HEK293T (cell line): ENCODE measurements at regions of chr7 and their contacts with region 1.

Region 1: GRCh38 chr7:55255496-55256435 is 109.4 kb upstream of the LANCL2 start:
- DNase-seq: peak; percentile 81

Region 2: GRCh38 chr7:54773472-54774399 is 482.0 kb before region 1 on chr7:
- CTCF ChIA-PET with region 1: interaction called, 22 read pairs
- POLR2A ChIA-PET with region 1: interaction called, 5 read pairs
- DNase-seq: peak; percentile 76

Region 3: GRCh38 chr7:54788664-54789063 is 467.1 kb before region 1 on chr7:
- CTCF ChIA-PET with region 1: interaction called, 26 read pairs
- POLR2A ChIA-PET with region 1: interaction called, 5 read pairs
- DNase-seq: peak; percentile 69